OCI-LY7 (cell line): ENCODE measurements at regions of chr1 and their contacts with region 1.

Region 1: DNA sequence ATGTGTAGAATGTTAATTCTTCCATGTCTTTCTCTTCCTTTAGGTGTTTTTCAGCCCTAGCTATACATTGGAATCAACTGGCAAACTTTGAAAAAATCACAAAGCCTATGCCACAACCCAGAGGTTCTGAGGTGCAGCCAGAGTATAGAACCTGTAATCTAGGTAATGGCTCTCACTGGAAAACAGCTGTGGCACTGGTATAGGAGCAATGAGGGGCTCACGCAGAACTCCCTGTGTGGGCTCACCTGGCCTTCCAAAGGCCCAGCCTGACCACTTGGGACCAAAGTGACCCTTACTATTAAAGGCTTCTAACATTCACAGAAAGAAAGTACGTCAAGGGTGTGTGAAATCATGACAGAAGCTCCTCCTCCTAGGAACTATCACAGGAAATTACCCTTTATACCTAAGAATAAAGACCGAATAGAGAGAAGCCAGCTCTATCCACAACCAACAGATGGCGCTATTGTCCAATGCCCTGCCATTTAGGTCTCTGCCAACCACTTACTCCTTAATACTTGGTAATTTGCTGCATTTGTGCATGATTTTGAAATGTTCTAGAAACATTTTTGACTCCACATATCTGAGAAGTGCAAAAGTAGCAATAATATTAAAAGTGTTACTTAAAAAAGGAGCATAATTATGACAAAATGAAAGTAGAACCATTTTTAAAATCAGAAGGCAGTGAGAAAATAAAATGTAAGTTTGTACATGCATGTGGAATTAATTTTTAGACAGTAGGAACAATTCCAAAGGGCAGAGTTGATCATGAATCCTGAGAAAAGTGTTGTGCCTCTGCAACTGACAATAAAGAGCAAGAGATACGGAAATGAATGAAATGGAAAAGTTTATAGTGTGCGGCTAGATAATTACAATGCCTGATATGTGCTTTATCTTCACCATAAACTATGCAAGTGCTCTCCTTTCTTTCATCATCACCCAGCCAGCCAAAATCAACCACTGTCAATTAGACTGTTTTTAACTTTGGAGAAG is 93.1 kb upstream of the HAO2 start:
- DNase-seq: peak; percentile 63
- H3K4me3 ChIP-seq: no peak overlapping the region
- H3K27ac ChIP-seq: no peak overlapping the region
- H3K4me1 ChIP-seq: no peaks in the 10 kb centered on the region
- CTCF ChIP-seq: peak; percentile 97

Region 2: GRCh38 chr1:119010201-119010600 is 265.2 kb before region 1 on chr1:
- CTCF ChIA-PET with region 1: no interaction called
- POLR2A ChIA-PET with region 1: no interaction called
- intact Hi-C with region 1: no loop called
- DNase-seq: no peak
- H3K4me3 ChIP-seq: no peak overlapping the region
- H3K27ac ChIP-seq: no peak overlapping the region
- H3K4me1 ChIP-seq: no peaks in the 10 kb centered on the region
- CTCF ChIP-seq: no peak

Region 3: GRCh38 chr1:119327436-119328155 is 52.2 kb after region 1 on chr1:
- CTCF ChIA-PET with region 1: no interaction called
- POLR2A ChIA-PET with region 1: no interaction called
- intact Hi-C with region 1: no loop called
- DNase-seq: no peak
- H3K4me3 ChIP-seq: no peak overlapping the region
- H3K27ac ChIP-seq: no peak overlapping the region
- H3K4me1 ChIP-seq: no peaks in the 10 kb centered on the region
- CTCF ChIP-seq: peak; percentile 76

Region 4: GRCh38 chr1:119364640-119365039 is 89.2 kb after region 1 on chr1:
- CTCF ChIA-PET with region 1: no interaction called
- POLR2A ChIA-PET with region 1: no interaction called
- intact Hi-C with region 1: loop called (anchors 1 kb)
- DNase-seq: no peak
- H3K4me3 ChIP-seq: no peak overlapping the region
- H3K27ac ChIP-seq: no peak overlapping the region
- H3K4me1 ChIP-seq: no peaks in the 10 kb centered on the region
- CTCF ChIP-seq: no peak

Region 5: GRCh38 chr1:119420644-119421043 is 145.2 kb after region 1 on chr1:
- CTCF ChIA-PET with region 1: no interaction called
- POLR2A ChIA-PET with region 1: no interaction called
- intact Hi-C with region 1: no loop called
- DNase-seq: no peak
- H3K4me3 ChIP-seq: no peak overlapping the region
- H3K27ac ChIP-seq: no peak overlapping the region
- H3K4me1 ChIP-seq: no peaks in the 10 kb centered on the region
- CTCF ChIP-seq: no peak